GM10248 (cell line): ENCODE measurements at regions of chr19 and their contacts with region 1.

Region 1: GRCh38 chr19:17305517-17306284 is at the start of gene MRPL34:
- DNase-seq: peak; percentile 89
- CTCF ChIP-seq: peak; percentile 74

Region 2: GRCh38 chr19:17292286-17293097 is 13.2 kb before region 1 on chr19:
- CTCF ChIA-PET with region 1: interaction called, 51 read pairs
- POLR2A ChIA-PET with region 1: no interaction called
- DNase-seq: peak; percentile 97
- CTCF ChIP-seq: peak; percentile 89

Region 3: GRCh38 chr19:17352608-17353280 is 47.0 kb after region 1 on chr19:
- CTCF ChIA-PET with region 1: no interaction called
- POLR2A ChIA-PET with region 1: no interaction called
- DNase-seq: no peak
- CTCF ChIP-seq: no peak

Region 4: DNA sequence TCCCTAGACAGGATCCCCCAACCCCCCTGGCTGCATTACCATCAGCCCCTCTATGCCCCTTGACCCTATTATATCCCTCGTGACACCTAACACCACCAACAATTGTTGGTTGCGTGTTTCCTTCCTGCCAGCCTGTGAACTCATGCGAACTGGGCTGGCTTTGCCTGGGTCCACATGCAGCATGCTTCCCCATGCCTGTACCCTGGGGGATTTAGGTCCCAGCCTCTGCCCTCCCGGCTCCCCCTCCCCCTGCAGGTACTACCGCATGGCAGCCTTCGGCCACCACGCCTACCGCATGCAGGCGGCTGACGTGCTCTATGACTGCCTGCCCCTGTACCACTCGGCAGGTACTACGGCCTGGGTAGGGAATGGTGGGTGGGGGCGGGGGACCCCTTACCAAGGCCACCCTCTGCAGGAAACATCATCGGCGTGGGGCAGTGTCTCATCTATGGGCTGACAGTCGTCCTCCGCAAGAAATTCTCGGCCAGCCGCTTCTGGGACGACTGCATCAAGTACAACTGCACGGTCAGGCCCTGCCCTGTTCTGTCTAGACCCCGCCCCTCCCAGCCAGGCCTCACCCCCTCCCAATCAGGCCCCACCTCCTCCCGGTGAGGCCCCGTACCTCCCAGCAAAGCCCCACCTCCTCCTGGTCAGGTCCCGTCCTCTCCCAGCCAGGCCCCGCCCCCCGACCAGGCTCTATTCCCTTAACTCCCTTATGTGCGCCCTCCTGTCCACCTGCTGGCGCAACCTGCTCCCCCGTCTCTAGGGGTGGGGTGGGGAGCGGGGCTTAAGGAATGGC is 183.1 kb after region 1 on chr19:
- CTCF ChIA-PET with region 1: no interaction called
- POLR2A ChIA-PET with region 1: no interaction called
- DNase-seq: peak; percentile 89
- CTCF ChIP-seq: peak; percentile 44